ENCODE measurements at regions of chr6 and their contacts with region 1.

Region 1: GRCh38 chr6:3848925-3849605 is at the start of gene FAM50B:
- DNase-seq: peak; percentile 86
- H3K4me3 ChIP-seq: peak within 1 kb of the TSS; percentile 3 to 31 (median 12)
- H3K27ac ChIP-seq: peak within 1 kb of the TSS; percentile 21
- H3K4me1 ChIP-seq: peaks cover 4% of the 10 kb centered on the region
- H3K27me3 ChIP-seq: no peaks in the 10 kb centered on the region
- CTCF ChIP-seq: peak; percentile 87 to 92
- POLR2A ChIP-seq: peak; percentile 41
- total RNA-seq, gene FAM50B: 10.0 and 10.4 TPM in 2 replicates

Region 2: GRCh38 chr6:3742426-3743344 is 106.4 kb before region 1 on chr6:
- CTCF ChIA-PET with region 1: interaction called, 66 read pairs
- POLR2A ChIA-PET with region 1: no interaction called
- dilution Hi-C with region 1: no loop called
- intact Hi-C with region 1: loop called (anchors 1 kb)
- DNase-seq: peak; percentile 88
- H3K4me3 ChIP-seq: peak overlapping the region in 1 of 3 experiments; percentile 25
- H3K27ac ChIP-seq: peak overlapping the region; percentile 74
- H3K4me1 ChIP-seq: peaks cover 77% of the 10 kb centered on the region
- H3K27me3 ChIP-seq: no peaks in the 10 kb centered on the region
- CTCF ChIP-seq: peak; percentile 88 to 93
- POLR2A ChIP-seq: no peak

Region 3: GRCh38 chr6:3813150-3813780 is 35.8 kb before region 1 on chr6:
- CTCF ChIA-PET with region 1: interaction called, 39 read pairs
- POLR2A ChIA-PET with region 1: no interaction called
- dilution Hi-C with region 1: no loop called
- intact Hi-C with region 1: loop called (anchors 2 kb)
- DNase-seq: peak; percentile 95
- H3K4me3 ChIP-seq: no peak overlapping the region
- H3K27ac ChIP-seq: peak overlapping the region; percentile 95
- H3K4me1 ChIP-seq: peaks cover 44% of the 10 kb centered on the region
- H3K27me3 ChIP-seq: no peaks in the 10 kb centered on the region
- CTCF ChIP-seq: no peak
- POLR2A ChIP-seq: peak; percentile 55

Region 4: GRCh38 chr6:3861424-3861823 is 12.4 kb after region 1 on chr6:
- CTCF ChIA-PET with region 1: interaction called, 19 read pairs
- POLR2A ChIA-PET with region 1: no interaction called
- dilution Hi-C with region 1: no loop called
- intact Hi-C with region 1: no loop called
- DNase-seq: no peak
- H3K4me3 ChIP-seq: no peak overlapping the region
- H3K27ac ChIP-seq: no peak overlapping the region
- H3K4me1 ChIP-seq: no peaks in the 10 kb centered on the region
- H3K27me3 ChIP-seq: no peaks in the 10 kb centered on the region
- CTCF ChIP-seq: no peak
- POLR2A ChIP-seq: no peak

Region 5: DNA sequence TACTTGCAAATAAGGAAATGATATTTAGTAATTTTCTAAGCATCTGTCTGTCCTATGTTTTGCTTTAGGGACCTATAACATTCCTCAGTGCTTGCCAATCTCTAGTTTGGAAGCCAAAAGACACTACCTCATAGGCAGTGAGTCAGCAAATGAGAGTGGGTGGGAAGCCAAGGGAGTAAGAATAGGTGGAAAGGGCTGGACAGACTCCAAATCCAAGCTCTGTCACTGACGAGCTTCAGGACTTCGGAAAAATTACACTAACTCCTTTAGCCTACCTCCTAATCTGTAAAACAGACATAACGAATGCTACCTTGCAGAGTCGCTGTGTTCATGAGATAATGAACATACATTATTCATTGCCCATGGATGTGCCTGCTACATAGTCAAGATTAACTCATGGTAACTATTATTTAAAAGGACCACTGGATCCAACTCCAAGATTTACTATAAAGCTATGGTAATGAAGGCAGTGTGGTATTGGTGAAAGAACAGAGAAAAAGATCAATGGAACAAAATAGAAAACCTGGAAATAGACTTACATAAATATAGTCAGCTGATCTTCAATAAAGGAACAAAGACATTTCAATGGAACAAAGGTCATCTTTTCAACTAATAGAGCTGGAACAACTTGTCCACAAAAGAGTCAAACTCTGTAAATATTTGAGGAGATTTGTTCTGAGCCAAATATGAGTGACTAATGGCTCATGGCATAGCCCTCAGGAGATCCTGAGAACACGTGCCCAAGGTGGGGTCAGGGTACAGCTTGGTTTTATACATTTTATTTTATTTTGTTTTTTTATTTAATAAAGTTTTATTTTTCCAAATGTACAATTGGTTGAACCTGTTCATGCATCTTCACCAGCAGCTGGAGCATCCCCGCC is 64.3 kb after region 1 on chr6:
- CTCF ChIA-PET with region 1: interaction called, 64 read pairs
- POLR2A ChIA-PET with region 1: interaction called, 5 read pairs
- dilution Hi-C with region 1: no loop called
- intact Hi-C with region 1: loop called (anchors 2 kb)
- DNase-seq: peak; percentile 99
- H3K4me3 ChIP-seq: peak overlapping the region in 1 of 3 experiments; percentile 10
- H3K27ac ChIP-seq: peak overlapping the region; percentile 98
- H3K4me1 ChIP-seq: peaks cover 72% of the 10 kb centered on the region
- H3K27me3 ChIP-seq: no peaks in the 10 kb centered on the region
- CTCF ChIP-seq: no peak
- POLR2A ChIP-seq: peak; percentile 52

Region 6: DNA sequence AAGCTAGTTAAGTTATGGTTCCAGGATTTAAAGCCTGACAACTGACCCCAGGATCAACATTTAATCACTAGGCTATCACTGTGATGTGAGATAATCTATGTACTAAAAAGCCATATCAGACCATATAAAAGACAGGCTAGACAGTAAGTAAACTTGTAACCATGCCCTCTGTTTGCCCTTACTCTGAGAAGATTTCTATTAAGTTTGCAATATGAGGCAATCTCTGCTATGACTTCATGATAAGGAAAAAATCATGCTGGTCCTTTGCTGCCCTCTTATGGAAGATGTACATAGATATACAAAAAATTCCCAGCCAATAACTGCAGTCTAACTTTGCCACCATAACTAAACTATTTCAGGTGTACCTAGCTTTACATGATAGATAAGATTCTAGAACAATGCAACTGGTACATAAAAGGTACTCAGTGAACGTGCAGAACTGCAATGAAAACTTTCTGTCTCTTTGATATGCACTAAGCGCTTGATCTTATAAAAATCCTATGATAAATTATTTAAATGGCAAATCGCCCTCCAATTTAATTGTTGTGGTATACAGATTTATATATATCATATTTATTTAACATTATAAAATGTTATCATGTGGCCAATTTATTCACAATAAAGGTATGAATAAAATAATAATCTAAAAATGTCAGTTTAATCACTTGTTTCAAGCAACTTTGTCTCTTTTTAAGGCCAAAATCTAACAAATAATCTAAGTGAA is 159.4 kb after region 1 on chr6:
- CTCF ChIA-PET with region 1: interaction called, 12 read pairs
- POLR2A ChIA-PET with region 1: no interaction called
- dilution Hi-C with region 1: no loop called
- intact Hi-C with region 1: no loop called
- DNase-seq: peak; percentile 76
- H3K4me3 ChIP-seq: no peak overlapping the region
- H3K27ac ChIP-seq: no peak overlapping the region
- H3K4me1 ChIP-seq: no peaks in the 10 kb centered on the region
- H3K27me3 ChIP-seq: no peaks in the 10 kb centered on the region
- CTCF ChIP-seq: peak; percentile 19 to 45
- POLR2A ChIP-seq: no peak

Region 7: DNA sequence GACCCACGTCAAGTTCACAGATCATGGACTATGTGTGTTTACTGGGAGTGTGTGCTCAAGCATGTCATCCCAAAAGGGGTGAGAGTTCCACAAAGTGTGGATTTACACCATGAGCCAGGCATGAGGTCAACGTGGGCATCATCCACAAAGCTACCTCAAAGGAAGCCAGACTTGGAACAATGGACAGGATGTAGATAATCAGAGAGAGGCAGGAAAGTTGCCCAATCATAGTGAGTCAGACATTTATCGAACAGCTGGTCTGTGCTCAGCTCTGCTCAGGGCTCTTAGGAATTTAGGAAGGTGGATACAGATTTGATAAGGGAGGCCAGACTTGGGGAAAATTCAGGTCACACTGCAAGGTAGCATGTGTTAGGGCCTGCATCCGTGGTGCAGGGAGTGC is 610.0 kb after region 1 on chr6:
- CTCF ChIA-PET with region 1: no interaction called
- POLR2A ChIA-PET with region 1: no interaction called
- dilution Hi-C with region 1: no loop called
- intact Hi-C with region 1: no loop called
- DNase-seq: peak; percentile 89
- H3K4me3 ChIP-seq: no peak overlapping the region
- H3K27ac ChIP-seq: peak overlapping the region; percentile 78
- H3K4me1 ChIP-seq: peaks cover 12% of the 10 kb centered on the region
- H3K27me3 ChIP-seq: no peaks in the 10 kb centered on the region
- CTCF ChIP-seq: no peak
- POLR2A ChIP-seq: no peak